Mammary epithelial cell (primary cell): ENCODE measurements at regions of chr3 and their contacts with region 1.

Region 1: DNA sequence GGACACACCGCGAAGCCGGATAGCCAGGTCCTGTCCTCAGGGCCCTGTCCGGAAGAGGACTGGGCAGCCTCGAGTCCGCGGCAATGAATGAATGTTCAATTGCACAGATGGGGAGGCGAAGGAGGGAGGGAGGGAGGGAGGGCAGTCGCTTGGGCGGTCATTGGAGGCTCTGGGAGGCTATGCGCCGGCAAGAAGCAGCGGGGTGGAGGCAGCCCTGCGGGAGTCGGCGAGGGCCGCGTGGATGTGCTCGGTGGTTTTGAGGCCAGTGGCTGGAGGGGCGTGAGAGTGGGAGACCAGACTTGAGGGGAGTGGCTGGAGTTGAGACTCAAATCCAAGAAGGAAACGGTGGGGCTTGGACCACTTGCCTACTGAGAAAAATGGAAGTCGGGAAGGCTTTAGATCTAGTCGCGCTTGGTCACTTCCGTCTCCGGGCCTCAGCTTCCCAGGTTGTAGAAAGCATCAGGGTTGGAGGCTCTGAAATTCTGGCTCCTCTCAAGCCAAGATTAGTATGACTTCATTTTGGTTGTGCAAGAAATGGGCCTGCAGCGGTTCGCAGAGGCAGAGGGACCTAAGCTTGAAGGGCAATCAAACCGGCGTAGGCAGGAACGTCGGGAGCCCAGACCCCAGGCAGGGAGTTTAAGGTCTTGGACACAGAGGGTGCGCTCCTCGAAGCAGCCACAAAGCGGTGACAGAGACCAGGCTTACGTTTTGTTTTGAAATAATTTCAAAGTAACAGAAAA is 21.1 kb upstream of the PLXND1 start:
- DNase-seq: peak; percentile 73
- H3K4me3 ChIP-seq: peak overlapping the region; percentile 31 to 56 (median 43)
- H3K27ac ChIP-seq: peak overlapping the region; percentile 41
- H3K4me1 ChIP-seq: peaks cover 25% of the 10 kb centered on the region
- H3K27me3 ChIP-seq: no peaks in the 10 kb centered on the region
- CTCF ChIP-seq: peak; percentile 75 to 82

Region 2: GRCh38 chr3:129576514-129577352 is 50.9 kb before region 1 on chr3:
- CTCF ChIA-PET with region 1: no interaction called
- dilution Hi-C with region 1: no loop called
- in situ Hi-C with region 1: no loop called
- intact Hi-C with region 1: no loop called
- DNase-seq: no peak
- H3K4me3 ChIP-seq: no peak overlapping the region
- H3K27ac ChIP-seq: no peak overlapping the region
- H3K4me1 ChIP-seq: no peaks in the 10 kb centered on the region
- H3K27me3 ChIP-seq: no peaks in the 10 kb centered on the region
- CTCF ChIP-seq: no peak

Region 3: DNA sequence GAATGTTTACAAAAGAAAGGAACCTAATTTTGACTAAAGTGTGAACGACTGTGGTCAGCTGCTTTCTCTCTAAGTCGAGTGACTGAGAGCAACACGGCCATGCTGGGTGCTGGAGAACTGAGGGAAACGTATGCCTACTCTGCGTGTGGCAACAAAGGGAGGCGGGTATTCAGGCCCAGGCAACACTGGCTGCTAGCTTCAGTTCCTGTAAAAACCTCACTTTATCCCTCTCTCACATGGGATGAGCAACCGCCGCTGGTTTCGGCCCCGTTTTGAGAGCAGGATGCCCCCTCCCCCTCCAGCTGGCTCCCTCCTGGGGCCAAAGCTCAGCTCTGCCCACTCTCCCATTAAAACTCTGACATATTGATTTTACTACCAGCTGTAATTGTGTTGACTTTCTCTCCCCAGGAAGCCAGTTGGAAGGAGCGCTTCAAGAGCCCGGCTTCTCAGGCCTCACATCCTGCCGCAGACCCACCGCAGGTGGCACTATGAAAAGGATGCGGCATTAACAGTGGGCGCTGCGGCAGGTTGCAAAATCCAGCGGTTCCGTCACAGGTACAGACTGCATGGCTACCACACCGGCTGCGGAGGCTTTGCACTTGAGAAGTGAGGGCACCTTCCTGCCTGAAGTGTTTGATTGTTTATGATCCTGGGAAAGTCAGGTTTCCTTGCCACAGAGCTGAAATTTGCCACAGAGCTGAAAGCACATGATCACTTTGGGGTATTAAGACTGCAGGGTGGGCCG is 33.8 kb before region 1 on chr3:
- CTCF ChIA-PET with region 1: no interaction called
- dilution Hi-C with region 1: loop called (anchors 5 kb)
- in situ Hi-C with region 1: no loop called
- intact Hi-C with region 1: no loop called
- DNase-seq: no peak
- H3K4me3 ChIP-seq: no peak overlapping the region
- H3K27ac ChIP-seq: no peak overlapping the region
- H3K4me1 ChIP-seq: no peaks in the 10 kb centered on the region
- H3K27me3 ChIP-seq: no peaks in the 10 kb centered on the region
- CTCF ChIP-seq: no peak

Region 4: GRCh38 chr3:129927072-129927471 is 299.5 kb after region 1 on chr3:
- CTCF ChIA-PET with region 1: no interaction called
- dilution Hi-C with region 1: loop called (anchors 10 kb)
- in situ Hi-C with region 1: loop called in 1 of 2 experiments (anchors 10 kb)
- intact Hi-C with region 1: no loop called
- DNase-seq: no peak
- H3K4me3 ChIP-seq: no peak overlapping the region
- H3K27ac ChIP-seq: no peak overlapping the region
- H3K4me1 ChIP-seq: no peaks in the 10 kb centered on the region
- H3K27me3 ChIP-seq: no peaks in the 10 kb centered on the region
- CTCF ChIP-seq: no peak

Region 5: GRCh38 chr3:129992781-129993180 is 365.2 kb after region 1 on chr3:
- CTCF ChIA-PET with region 1: interaction called, 3 read pairs
- dilution Hi-C with region 1: no loop called
- in situ Hi-C with region 1: no loop called
- intact Hi-C with region 1: loop called (anchors 10 kb)
- DNase-seq: no peak
- H3K4me3 ChIP-seq: no peak overlapping the region
- H3K27ac ChIP-seq: no peak overlapping the region
- H3K4me1 ChIP-seq: peaks cover 7% of the 10 kb centered on the region
- H3K27me3 ChIP-seq: no peaks in the 10 kb centered on the region
- CTCF ChIP-seq: peak; percentile 7 to 29